ENCODE measurements at regions of chr12 and their contacts with region 1.

Region 1: DNA sequence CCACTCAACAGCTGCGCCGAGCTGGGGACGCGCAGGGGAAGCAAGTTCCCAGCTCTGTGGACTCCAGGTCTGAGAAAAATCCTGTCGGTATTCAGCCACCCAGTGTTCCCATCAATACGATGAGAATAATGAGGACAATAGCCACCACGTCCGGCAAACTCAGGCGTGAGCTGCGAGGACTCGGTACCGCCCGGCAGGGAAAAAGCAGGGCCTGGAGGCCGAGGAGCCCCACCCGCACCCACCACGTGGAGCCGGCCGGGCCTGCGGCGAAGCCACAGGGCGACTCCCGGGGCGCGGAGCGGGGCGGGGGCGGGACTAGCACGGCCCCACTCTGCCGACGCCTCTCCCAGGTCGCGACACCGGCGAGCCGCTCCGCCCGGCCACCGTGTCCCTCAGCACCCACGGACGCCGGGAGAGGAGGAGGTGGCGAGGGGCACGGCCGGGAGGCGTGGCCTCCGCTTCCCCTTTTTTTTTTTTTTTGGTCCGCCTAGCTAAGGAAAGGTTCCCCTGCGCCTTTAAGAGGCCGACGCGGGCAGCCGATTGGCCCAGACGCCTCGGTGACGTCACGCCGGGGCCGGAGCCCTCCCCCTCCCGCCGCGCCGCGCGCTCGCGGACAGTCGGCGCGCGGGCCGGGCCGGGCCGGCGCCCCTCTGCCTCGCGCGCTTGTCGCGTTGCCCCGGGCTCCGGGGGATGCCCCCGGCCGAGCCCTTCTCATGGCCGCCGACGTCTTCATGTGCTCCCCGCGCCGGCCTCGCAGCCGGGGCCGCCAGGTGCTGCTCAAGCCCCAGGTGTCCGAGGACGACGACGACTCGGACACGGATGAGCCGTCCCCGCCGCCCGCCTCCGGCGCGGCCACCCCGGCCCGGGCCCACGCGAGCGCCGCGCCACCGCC is at the start of gene MLXIP:
- DNase-seq: peak; percentile 94
- ATAC-seq: peak; percentile 79
- H3K4me3 Mint-ChIP-seq: peak within 1 kb of the TSS; percentile 99
- H3K27ac Mint-ChIP-seq: peak within 1 kb of the TSS; percentile 97
- H3K4me1 Mint-ChIP-seq: peaks cover 45% of the 10 kb centered on the region
- H3K27me3 Mint-ChIP-seq: peaks cover 6% of the 10 kb centered on the region
- total RNA-seq, gene MLXIP: 61.0 to 61.7 TPM

Region 2: GRCh38 chr12:121980191-121980891 is 98.0 kb before region 1 on chr12:
- POLR2A ChIA-PET with region 1: no interaction called
- DNase-seq: no peak
- ATAC-seq: no peak
- H3K4me3 Mint-ChIP-seq: no peak overlapping the region
- H3K27ac Mint-ChIP-seq: no peak overlapping the region
- H3K4me1 Mint-ChIP-seq: peaks cover 6% of the 10 kb centered on the region
- H3K27me3 Mint-ChIP-seq: peaks cover 9% of the 10 kb centered on the region

Region 3: GRCh38 chr12:121990114-121991021 is 88.0 kb before region 1 on chr12:
- POLR2A ChIA-PET with region 1: no interaction called
- DNase-seq: no peak
- ATAC-seq: no peak
- H3K4me3 Mint-ChIP-seq: no peak overlapping the region
- H3K27ac Mint-ChIP-seq: no peak overlapping the region
- H3K4me1 Mint-ChIP-seq: peaks cover 4% of the 10 kb centered on the region
- H3K27me3 Mint-ChIP-seq: peaks cover 3% of the 10 kb centered on the region

Region 4: DNA sequence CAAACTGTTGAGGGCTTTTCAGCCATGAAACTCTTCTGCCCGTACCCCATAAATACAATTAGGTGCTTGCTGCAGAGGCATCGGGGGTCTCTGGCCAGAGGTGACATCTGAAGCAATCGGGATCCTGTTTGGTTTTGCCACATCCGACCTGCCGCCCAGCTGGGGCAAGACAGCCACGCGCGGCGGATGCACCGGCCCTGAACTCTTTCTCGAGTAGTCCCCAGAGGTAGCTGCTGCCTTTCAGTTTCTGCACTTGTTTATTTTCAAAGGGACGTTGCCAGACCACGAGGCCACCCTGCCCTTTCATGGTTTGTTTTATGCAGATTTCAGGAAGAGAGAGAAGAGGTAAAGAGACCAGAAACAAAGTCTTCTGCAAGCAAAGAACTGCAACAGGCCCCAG is 10.4 kb before region 1 on chr12:
- POLR2A ChIA-PET with region 1: interaction called, 79 read pairs
- DNase-seq: peak; percentile 75
- ATAC-seq: peak; percentile 91
- H3K4me3 Mint-ChIP-seq: peak overlapping the region; percentile 70
- H3K27ac Mint-ChIP-seq: peak overlapping the region; percentile 91
- H3K4me1 Mint-ChIP-seq: peaks cover 27% of the 10 kb centered on the region
- H3K27me3 Mint-ChIP-seq: peaks cover 2% of the 10 kb centered on the region

Region 5: GRCh38 chr12:122090759-122091515 is 12.6 kb after region 1 on chr12:
- POLR2A ChIA-PET with region 1: interaction called, 67 read pairs
- DNase-seq: no peak
- ATAC-seq: no peak
- H3K4me3 Mint-ChIP-seq: peak overlapping the region; percentile 9
- H3K27ac Mint-ChIP-seq: peak overlapping the region; percentile 40
- H3K4me1 Mint-ChIP-seq: peaks cover 46% of the 10 kb centered on the region
- H3K27me3 Mint-ChIP-seq: no peaks in the 10 kb centered on the region

Region 6: GRCh38 chr12:122097927-122098756 is 19.8 kb after region 1 on chr12:
- POLR2A ChIA-PET with region 1: interaction called, 67 read pairs
- DNase-seq: no peak
- ATAC-seq: peak; percentile 32
- H3K4me3 Mint-ChIP-seq: peak overlapping the region; percentile 39
- H3K27ac Mint-ChIP-seq: peak overlapping the region; percentile 85
- H3K4me1 Mint-ChIP-seq: peaks cover 41% of the 10 kb centered on the region
- H3K27me3 Mint-ChIP-seq: no peaks in the 10 kb centered on the region

Region 7: GRCh38 chr12:122107261-122107660 is 28.9 kb after region 1 on chr12:
- POLR2A ChIA-PET with region 1: interaction called, 18 read pairs
- DNase-seq: no peak
- ATAC-seq: no peak
- H3K4me3 Mint-ChIP-seq: no peak overlapping the region
- H3K27ac Mint-ChIP-seq: peak overlapping the region; percentile 42
- H3K4me1 Mint-ChIP-seq: peaks cover 46% of the 10 kb centered on the region
- H3K27me3 Mint-ChIP-seq: no peaks in the 10 kb centered on the region

Region 8: DNA sequence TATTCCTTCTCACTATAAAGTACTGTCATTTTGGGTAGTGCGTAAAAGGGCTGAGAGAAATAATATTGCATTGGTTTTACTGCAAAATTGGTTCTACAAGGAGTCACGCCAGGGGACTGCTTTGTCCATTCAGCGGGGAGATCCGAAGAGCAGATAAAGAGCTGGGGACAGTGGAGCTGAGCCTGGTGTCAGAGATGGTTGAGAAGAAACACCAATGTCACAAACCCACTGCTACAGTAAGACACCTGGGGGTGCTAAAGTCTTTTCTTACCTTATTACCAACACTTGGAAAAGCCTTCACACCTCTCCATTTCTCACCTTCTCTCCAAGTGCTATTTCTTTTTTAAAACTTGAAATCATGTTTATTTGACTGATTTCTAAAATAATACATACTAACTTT is 81.5 kb after region 1 on chr12:
- POLR2A ChIA-PET with region 1: no interaction called
- DNase-seq: no peak
- ATAC-seq: no peak
- H3K4me3 Mint-ChIP-seq: no peak overlapping the region
- H3K27ac Mint-ChIP-seq: no peak overlapping the region
- H3K4me1 Mint-ChIP-seq: peaks cover 10% of the 10 kb centered on the region
- H3K27me3 Mint-ChIP-seq: no peaks in the 10 kb centered on the region